SK-N-SH (cell line): ENCODE measurements at regions of chr6 and their contacts with region 1.

Region 1: GRCh38 chr6:138987640-138988468 is at the start of gene REPS1:
- DNase-seq: peak; percentile 97
- H3K4me3 ChIP-seq: peak within 1 kb of the TSS; percentile 75 to 80
- H3K27ac ChIP-seq: peak within 1 kb of the TSS; percentile 70 to 82
- H3K4me1 ChIP-seq: peaks cover 0 to 6% of the 10 kb centered on the region in 2 experiments; a peak in 2 of 4 replicates
- H3K27me3 ChIP-seq: no peaks in the 10 kb centered on the region
- CTCF ChIP-seq: peak; percentile 74
- EP300 ChIP-seq: peak in 1 of 2 experiments; percentile 25; a peak in 1 of 4 replicates
- RAD21 ChIP-seq: peak; percentile 73
- polyA plus RNA-seq, gene REPS1: 26.2 and 30.4 TPM in 2 replicates

Region 2: DNA sequence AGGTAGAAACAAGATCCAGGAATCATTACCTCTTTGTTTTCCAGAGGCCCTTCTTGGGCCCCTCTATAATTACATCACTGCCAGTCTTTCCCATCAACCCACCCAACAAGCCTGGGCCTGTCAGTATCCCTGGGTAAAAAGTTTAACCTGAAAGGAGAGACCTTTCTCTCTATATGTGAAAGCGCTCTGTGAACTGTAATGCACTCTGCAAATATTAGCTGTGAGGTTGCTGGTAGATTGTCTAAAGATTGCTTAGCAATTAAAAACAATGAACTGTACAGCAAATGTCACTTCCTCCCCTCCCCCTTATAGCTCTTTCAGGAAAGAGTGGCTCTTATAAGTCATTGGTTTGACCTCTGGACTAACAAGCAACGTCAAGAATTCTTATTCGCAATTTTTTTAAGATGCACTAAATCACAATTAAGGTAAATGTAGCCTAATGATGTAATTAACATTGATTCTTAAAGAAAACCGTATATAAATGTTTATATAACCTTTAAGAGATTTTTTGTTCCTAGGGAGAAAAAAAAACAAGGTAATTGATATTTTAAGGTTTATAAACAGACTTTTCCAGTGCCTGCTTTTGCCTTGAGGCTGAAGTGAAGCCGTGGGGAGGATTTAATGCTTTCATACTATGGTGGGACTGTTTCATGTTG is 173.5 kb before region 1 on chr6:
- CTCF ChIA-PET with region 1: interaction called, 38 read pairs
- POLR2A ChIA-PET with region 1: interaction called, 4 read pairs
- DNase-seq: no peak
- H3K4me3 ChIP-seq: no peak overlapping the region
- H3K27ac ChIP-seq: no peak overlapping the region
- H3K4me1 ChIP-seq: no peaks in the 10 kb centered on the region; a peak in 1 of 4 replicates
- H3K27me3 ChIP-seq: no peaks in the 10 kb centered on the region
- CTCF ChIP-seq: no peak
- EP300 ChIP-seq: no peak
- RAD21 ChIP-seq: no peak

Region 3: GRCh38 chr6:139019722-139020121 is 31.9 kb after region 1 on chr6:
- CTCF ChIA-PET with region 1: interaction called, 12 read pairs
- POLR2A ChIA-PET with region 1: no interaction called
- DNase-seq: no peak
- H3K4me3 ChIP-seq: no peak overlapping the region
- H3K27ac ChIP-seq: no peak overlapping the region
- H3K4me1 ChIP-seq: no peaks in the 10 kb centered on the region; a peak in 1 of 4 replicates
- H3K27me3 ChIP-seq: no peaks in the 10 kb centered on the region
- CTCF ChIP-seq: no peak
- EP300 ChIP-seq: no peak
- RAD21 ChIP-seq: no peak

Region 4: DNA sequence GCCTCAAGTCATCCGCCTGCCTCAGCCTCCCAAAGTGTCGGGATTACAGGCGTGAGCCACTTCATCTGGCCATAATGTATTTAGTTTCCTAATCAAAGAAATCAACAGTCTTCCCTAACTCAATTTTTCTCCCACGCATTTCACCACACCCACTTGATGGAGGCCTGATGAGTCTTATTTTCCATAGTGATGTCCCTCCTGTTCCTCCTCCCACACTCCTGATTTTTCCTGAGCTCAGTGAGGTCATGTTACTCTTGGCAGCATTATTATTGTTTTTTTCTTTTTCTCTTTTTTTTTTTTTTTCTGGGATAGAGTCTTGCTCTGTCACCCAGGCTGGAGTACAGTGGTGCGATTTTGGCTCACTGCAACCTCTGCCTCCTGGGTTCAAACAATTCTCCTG is 49.6 kb after region 1 on chr6:
- CTCF ChIA-PET with region 1: no interaction called
- POLR2A ChIA-PET with region 1: no interaction called
- DNase-seq: no peak
- H3K4me3 ChIP-seq: no peak overlapping the region
- H3K27ac ChIP-seq: peak overlapping the region in 1 of 2 experiments; percentile 52; a peak in 2 of 4 replicates
- H3K4me1 ChIP-seq: no peaks in the 10 kb centered on the region
- H3K27me3 ChIP-seq: no peaks in the 10 kb centered on the region
- CTCF ChIP-seq: no peak
- EP300 ChIP-seq: no peak
- RAD21 ChIP-seq: no peak

Region 5: DNA sequence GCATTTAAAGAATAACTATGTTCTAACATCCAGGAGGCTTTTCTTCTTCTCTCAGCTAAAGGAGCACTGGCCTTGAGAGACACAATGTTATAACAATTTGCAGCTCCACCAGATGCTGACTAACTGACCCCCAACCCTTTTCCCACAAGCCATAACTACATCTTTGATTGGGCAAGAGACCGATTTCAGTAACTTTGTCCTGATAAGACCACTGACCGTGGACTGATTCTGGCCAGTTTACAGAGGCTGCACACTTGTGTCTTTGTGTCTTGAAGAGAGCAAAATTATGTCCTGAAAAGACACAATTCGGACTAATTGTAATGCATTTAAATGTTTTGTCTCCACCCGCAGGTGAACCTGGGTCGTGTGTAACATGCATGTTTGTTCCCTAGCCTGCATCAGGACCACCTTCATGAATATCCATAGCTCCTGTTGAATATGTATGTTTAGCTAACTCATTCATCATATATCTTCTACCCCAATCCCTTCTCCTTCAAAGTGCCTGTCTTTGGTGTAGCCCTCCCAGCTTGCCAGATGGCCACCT is 63.0 kb after region 1 on chr6:
- CTCF ChIA-PET with region 1: no interaction called
- POLR2A ChIA-PET with region 1: no interaction called
- DNase-seq: no peak
- H3K4me3 ChIP-seq: no peak overlapping the region
- H3K27ac ChIP-seq: no peak overlapping the region
- H3K4me1 ChIP-seq: no peaks in the 10 kb centered on the region
- H3K27me3 ChIP-seq: no peaks in the 10 kb centered on the region
- CTCF ChIP-seq: no peak
- EP300 ChIP-seq: no peak
- RAD21 ChIP-seq: no peak